ENCODE measurements at regions of chr5 and their contacts with region 1.

Region 1: GRCh38 chr5:151141535-151141934 is 16.0 kb downstream of the ANXA6 start:
- DNase-seq: peak in 8 of 9 experiments; percentile 42 to 85 (median 69)
- ATAC-seq: peak; percentile 51
- H3K4me3 ChIP-seq: peak overlapping the region; percentile 10 to 43
- H3K4me3 Mint-ChIP-seq: peak overlapping the region; percentile 82
- H3K27ac ChIP-seq: peak overlapping the region; percentile 26 to 90
- H3K27ac Mint-ChIP-seq: peak overlapping the region; percentile 95
- H3K4me1 ChIP-seq: peaks cover 93% of the 10 kb centered on the region
- H3K4me1 Mint-ChIP-seq: peaks cover 98% of the 10 kb centered on the region
- H3K27me3 ChIP-seq: no peaks in the 10 kb centered on the region
- H3K27me3 Mint-ChIP-seq: no peaks in the 10 kb centered on the region
- CTCF ChIP-seq: no peak

Region 2: DNA sequence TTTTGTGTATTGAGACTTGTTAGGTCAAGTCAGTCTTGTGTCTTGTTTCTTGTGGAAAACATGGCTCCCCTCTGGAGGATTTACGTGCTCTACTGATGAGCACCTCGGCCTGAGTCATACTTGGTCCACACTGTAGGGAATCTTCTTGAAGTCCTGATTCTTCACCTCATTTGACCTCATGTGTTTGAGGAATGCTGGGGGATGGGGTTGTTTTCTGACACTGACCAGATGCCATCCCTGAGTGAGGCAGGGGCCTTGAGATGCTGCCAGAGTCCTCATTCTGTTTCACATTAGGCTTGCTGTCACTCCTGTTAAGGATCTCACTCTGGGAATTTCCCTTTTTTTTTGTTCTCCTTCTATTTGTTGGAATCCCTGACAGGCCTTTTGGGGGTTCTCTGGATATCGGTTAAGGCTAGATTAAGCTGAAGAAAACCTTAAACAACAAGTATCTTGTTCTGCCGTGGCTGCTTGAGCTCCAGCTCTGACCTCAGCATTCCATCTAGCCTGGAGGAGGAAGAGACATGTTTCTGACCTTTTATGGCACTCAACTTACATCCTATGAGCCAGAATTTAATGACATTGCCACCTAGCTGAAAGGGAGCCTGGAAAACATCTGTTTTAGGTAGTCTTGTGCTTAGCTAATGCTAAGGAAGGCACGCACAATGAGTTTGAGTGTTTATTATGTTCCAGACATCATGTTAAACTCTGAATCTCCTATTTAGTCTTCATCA is 763.4 kb before region 1 on chr5:
- CTCF ChIA-PET with region 1: no interaction called
- POLR2A ChIA-PET with region 1: no interaction called
- intact Hi-C with region 1: no loop called
- DNase-seq: no peak
- ATAC-seq: no peak
- H3K4me3 ChIP-seq: no peak overlapping the region
- H3K4me3 Mint-ChIP-seq: no peak overlapping the region
- H3K27ac ChIP-seq: peak overlapping the region in 1 of 2 experiments; percentile 66
- H3K27ac Mint-ChIP-seq: peak overlapping the region; percentile 89
- H3K4me1 ChIP-seq: peaks cover 5% of the 10 kb centered on the region
- H3K4me1 Mint-ChIP-seq: peaks cover 16% of the 10 kb centered on the region
- H3K27me3 ChIP-seq: no peaks in the 10 kb centered on the region
- H3K27me3 Mint-ChIP-seq: no peaks in the 10 kb centered on the region
- CTCF ChIP-seq: no peak

Region 3: GRCh38 chr5:151157426-151158286 is 16.1 kb after region 1 on chr5 and contains the start of gene ANXA6:
- CTCF ChIA-PET with region 1: interaction called, 1,723 read pairs
- POLR2A ChIA-PET with region 1: interaction called, 36 read pairs
- intact Hi-C with region 1: loop called in 1 of 2 experiments (anchors 2 kb)
- DNase-seq: peak in 8 of 9 experiments; percentile 50 to 86 (median 66)
- ATAC-seq: peak; percentile 70
- H3K4me3 ChIP-seq: peak within 1 kb of the TSS; percentile 52 to 94
- H3K4me3 Mint-ChIP-seq: peak within 1 kb of the TSS; percentile 97
- H3K27ac ChIP-seq: peak within 1 kb of the TSS; percentile 68 to 90
- H3K27ac Mint-ChIP-seq: peak within 1 kb of the TSS; percentile 95
- H3K4me1 ChIP-seq: peaks cover 43% of the 10 kb centered on the region
- H3K4me1 Mint-ChIP-seq: peaks cover 65% of the 10 kb centered on the region
- H3K27me3 ChIP-seq: no peaks in the 10 kb centered on the region
- H3K27me3 Mint-ChIP-seq: no peaks in the 10 kb centered on the region
- CTCF ChIP-seq: no peak
- total RNA-seq, gene ANXA6: 83.5 to 89.4 TPM

Region 4: GRCh38 chr5:151191659-151192058 is 50.1 kb after region 1 on chr5:
- CTCF ChIA-PET with region 1: no interaction called
- POLR2A ChIA-PET with region 1: no interaction called
- intact Hi-C with region 1: no loop called
- DNase-seq: peak in 1 of 9 experiments; percentile 17
- ATAC-seq: no peak
- H3K4me3 ChIP-seq: no peak overlapping the region
- H3K4me3 Mint-ChIP-seq: no peak overlapping the region
- H3K27ac ChIP-seq: no peak overlapping the region
- H3K27ac Mint-ChIP-seq: peak overlapping the region; percentile 45
- H3K4me1 ChIP-seq: peaks cover 24% of the 10 kb centered on the region
- H3K4me1 Mint-ChIP-seq: peaks cover 61% of the 10 kb centered on the region
- H3K27me3 ChIP-seq: no peaks in the 10 kb centered on the region
- H3K27me3 Mint-ChIP-seq: no peaks in the 10 kb centered on the region
- CTCF ChIP-seq: no peak